ENCODE measurements at regions of chr17 and their contacts with region 1.

Region 1: GRCh38 chr17:32253117-32253611 is 12.5 kb upstream of the RHBDL3 start:
- DNase-seq: peak; percentile 76
- H3K4me3 ChIP-seq: no peak overlapping the region
- H3K27ac ChIP-seq: no peak overlapping the region
- H3K4me1 ChIP-seq: no peaks in the 10 kb centered on the region
- H3K27me3 ChIP-seq: no peaks in the 10 kb centered on the region
- CTCF ChIP-seq: peak; percentile 96

Region 2: DNA sequence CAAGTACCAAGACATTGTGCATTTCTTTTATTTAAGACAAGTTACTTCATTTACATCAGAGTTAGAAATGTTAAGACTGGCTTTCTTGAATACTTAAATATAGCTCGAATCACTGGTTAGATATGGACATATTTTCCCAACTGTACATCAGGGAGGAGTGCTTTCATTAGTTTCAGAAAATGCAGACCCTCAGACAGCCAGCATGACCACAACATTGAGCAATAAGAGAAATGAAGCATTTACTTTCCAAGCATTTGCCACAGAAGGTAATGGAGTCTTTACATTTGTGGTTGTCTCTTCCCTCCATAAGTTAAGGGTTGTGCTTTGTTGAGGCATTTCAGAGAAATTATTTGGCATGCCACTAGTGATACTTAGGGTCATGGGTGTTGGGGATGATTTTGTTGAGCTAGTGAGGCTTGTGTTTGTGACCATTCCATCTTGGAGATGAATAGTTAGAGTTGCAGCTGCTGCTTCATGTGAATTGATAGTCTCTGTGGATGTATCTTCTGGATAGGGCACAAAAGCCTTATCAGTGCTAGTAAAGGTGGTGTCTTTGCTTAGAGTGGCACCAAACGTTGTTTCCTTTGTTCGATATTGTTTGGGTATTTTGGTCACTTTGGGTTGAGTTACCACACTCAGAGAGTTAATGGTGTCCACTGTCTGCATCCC is 958.2 kb before region 1 on chr17:
- intact Hi-C with region 1: no loop called
- DNase-seq: no peak
- H3K4me3 ChIP-seq: no peak overlapping the region
- H3K27ac ChIP-seq: no peak overlapping the region
- H3K4me1 ChIP-seq: no peaks in the 10 kb centered on the region
- H3K27me3 ChIP-seq: no peaks in the 10 kb centered on the region
- CTCF ChIP-seq: no peak

Region 3: GRCh38 chr17:32319548-32319905 is 66.4 kb after region 1 on chr17:
- intact Hi-C with region 1: loop called (anchors 1 kb)
- DNase-seq: peak; percentile 79
- H3K4me3 ChIP-seq: peak overlapping the region; percentile 12
- H3K27ac ChIP-seq: no peak overlapping the region
- H3K4me1 ChIP-seq: no peaks in the 10 kb centered on the region
- H3K27me3 ChIP-seq: no peaks in the 10 kb centered on the region
- CTCF ChIP-seq: peak; percentile 96